H1 (cell line): ENCODE measurements at regions of chr3 and their contacts with region 1.

Region 1: DNA sequence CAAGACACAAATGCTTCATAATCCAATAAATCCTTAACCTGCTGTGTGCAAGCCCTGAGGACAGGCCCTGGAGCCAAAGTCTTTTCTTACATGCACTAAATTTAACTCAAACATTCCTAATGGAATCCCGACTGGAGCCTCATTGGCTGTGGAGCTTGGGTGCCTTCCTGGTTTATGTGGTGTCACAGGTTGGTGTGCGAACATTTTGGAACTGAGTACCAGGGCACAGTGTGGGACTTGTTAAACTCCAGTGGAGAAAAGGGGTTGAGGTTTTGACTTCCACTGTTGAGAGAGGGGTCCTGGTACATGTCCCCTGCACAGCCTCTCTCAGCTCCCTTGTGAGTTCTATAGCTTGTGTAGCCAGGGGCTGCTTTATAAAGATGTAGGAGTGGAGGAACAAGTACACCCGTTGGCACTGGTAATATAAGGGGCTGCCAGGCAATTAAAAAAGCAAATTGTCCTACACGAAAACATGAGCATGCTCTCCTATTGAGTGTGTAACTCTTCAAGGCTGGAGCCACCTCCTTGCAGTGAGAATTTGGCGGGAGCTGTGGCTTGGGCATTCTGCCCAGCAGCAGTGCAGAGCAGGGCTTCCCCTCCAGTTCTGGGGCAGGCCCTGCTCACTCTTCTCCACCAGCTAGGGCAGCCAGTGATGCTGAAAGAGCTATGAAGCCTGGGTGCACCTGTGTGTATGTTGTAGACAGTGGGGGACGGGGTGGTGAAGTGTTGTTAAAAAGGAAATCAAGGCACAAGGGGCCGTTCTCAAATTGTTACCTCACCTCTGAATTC is 218.1 kb downstream of the CLSTN2 start:
- DNase-seq: peak in 1 of 2 experiments; percentile 33
- H3K4me3 ChIP-seq: no peak overlapping the region
- H3K27ac ChIP-seq: no peak overlapping the region
- H3K4me1 ChIP-seq: no peaks in the 10 kb centered on the region
- H3K27me3 ChIP-seq: no peaks in the 10 kb centered on the region
- CTCF ChIP-seq: no peak
- EP300 ChIP-seq: no peak
- POLR2A ChIP-seq: no peak
- RAD21 ChIP-seq: no peak

Region 2: GRCh38 chr3:140163159-140163763 is 10.2 kb after region 1 on chr3:
- CTCF ChIA-PET with region 1: interaction called, 11 read pairs
- POLR2A ChIA-PET with region 1: no interaction called
- DNase-seq: no peak
- H3K4me3 ChIP-seq: no peak overlapping the region
- H3K27ac ChIP-seq: no peak overlapping the region
- H3K4me1 ChIP-seq: no peaks in the 10 kb centered on the region
- H3K27me3 ChIP-seq: no peaks in the 10 kb centered on the region; a peak in 1 of 7 replicates
- CTCF ChIP-seq: no peak
- EP300 ChIP-seq: no peak
- POLR2A ChIP-seq: no peak
- RAD21 ChIP-seq: no peak